Mammary epithelial cell (primary cell): ENCODE measurements at regions of chr7 and their contacts with region 1.

Region 1: GRCh38 chr7:101299511-101300464 is 21.8 kb downstream of the IFT22 start:
- DNase-seq: no peak
- H3K4me3 ChIP-seq: no peak overlapping the region
- H3K27ac ChIP-seq: no peak overlapping the region
- H3K4me1 ChIP-seq: no peaks in the 10 kb centered on the region
- H3K27me3 ChIP-seq: peaks cover 39% of the 10 kb centered on the region
- CTCF ChIP-seq: no peak

Region 2: DNA sequence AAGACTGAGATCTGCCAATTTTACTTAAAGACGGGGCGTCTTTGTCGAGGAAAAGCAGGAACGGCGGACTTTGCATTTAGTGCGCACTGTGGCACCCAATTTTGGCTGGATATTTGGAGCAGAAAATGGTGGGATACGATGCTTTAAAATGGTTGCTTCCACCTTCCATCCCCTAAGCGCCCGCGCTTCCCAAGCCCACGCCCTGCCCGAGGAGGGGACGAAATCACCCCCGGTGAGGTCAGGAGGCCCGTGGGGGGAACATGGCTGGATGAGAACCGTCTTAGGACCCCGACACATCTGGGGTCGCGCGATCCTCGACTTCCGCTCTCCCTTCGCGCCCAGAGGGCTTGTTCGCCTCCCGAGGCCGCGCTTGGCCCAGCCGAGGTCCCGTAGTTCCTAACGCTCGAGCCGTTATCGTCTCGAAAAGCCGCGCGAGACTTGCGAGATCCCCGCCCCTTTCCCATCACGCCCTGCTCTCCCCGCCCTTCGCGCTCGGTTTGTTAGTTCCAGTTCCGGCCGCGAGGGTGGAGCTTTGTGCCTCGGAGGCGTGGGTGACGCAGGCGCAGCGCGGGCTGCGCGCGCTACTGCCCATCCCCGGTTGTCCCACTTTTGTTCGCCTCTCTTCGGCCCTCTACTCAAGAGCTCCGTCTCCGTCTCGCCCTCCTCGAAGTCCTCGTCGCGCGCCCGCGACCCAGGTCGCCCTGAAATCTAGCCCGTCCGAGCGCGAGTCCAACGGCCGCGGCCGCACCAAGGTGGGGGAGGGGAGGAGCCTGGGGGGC is 425.0 kb before region 1 on chr7 and contains the start of gene SRRT:
- CTCF ChIA-PET with region 1: no interaction called
- dilution Hi-C with region 1: no loop called
- in situ Hi-C with region 1: loop called in 1 of 2 experiments (anchors 25 kb)
- intact Hi-C with region 1: no loop called
- DNase-seq: peak; percentile 97
- H3K4me3 ChIP-seq: peak within 1 kb of the TSS; percentile 76 to 92 (median 89)
- H3K27ac ChIP-seq: peak within 1 kb of the TSS; percentile 79
- H3K4me1 ChIP-seq: peaks cover 21% of the 10 kb centered on the region
- H3K27me3 ChIP-seq: no peaks in the 10 kb centered on the region
- CTCF ChIP-seq: peak in 1 of 2 donors; percentile 39
- total RNA-seq, gene SRRT: 29.5 to 127 TPM

Region 3: DNA sequence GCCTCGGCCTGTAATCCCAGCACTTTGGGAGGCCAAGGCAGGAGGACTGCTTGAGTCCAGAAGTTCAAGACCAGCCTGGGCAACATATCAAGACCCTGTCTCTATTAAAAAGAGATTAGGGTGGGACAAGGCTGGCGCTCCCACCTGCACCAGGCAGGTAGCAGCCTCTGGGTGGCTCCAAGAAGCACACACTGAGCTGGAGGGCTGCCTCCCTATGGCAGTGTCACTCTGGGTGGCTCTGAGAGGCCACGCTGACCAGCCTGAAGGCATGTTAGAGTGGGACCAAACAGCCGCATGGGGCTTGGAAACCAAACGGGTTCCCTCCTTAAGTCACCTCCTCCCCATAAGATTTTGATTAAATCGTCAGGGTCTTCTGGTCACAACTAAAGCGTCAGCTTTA is 43.1 kb after region 1 on chr7:
- CTCF ChIA-PET with region 1: no interaction called
- dilution Hi-C with region 1: no loop called
- in situ Hi-C with region 1: no loop called
- intact Hi-C with region 1: no loop called
- DNase-seq: no peak
- H3K4me3 ChIP-seq: no peak overlapping the region
- H3K27ac ChIP-seq: no peak overlapping the region
- H3K4me1 ChIP-seq: no peaks in the 10 kb centered on the region
- H3K27me3 ChIP-seq: no peaks in the 10 kb centered on the region
- CTCF ChIP-seq: no peak